ENCODE measurements at regions of chr9 and their contacts with region 1.

Region 1: GRCh38 chr9:127519301-127520166 is 68.2 kb downstream of the LRSAM1 start:
- DNase-seq: peak; percentile 91
- H3K4me3 ChIP-seq: no peak overlapping the region
- H3K27ac ChIP-seq: peak overlapping the region; percentile 96
- H3K27me3 ChIP-seq: no peaks in the 10 kb centered on the region
- CTCF ChIP-seq: no peak

Region 2: GRCh38 chr9:127187231-127187956 is 332.1 kb before region 1 on chr9:
- CTCF ChIA-PET with region 1: no interaction called
- POLR2A ChIA-PET with region 1: no interaction called
- DNase-seq: peak; percentile 97
- H3K4me3 ChIP-seq: no peak overlapping the region
- H3K27ac ChIP-seq: peak overlapping the region; percentile 99
- H3K27me3 ChIP-seq: no peaks in the 10 kb centered on the region
- CTCF ChIP-seq: no peak

Region 3: GRCh38 chr9:127561619-127562500 is 42.3 kb after region 1 on chr9:
- CTCF ChIA-PET with region 1: interaction called, 4 read pairs
- POLR2A ChIA-PET with region 1: interaction called, 12 read pairs
- DNase-seq: peak; percentile 95
- H3K4me3 ChIP-seq: peak overlapping the region; percentile 40
- H3K27ac ChIP-seq: peak overlapping the region; percentile 95
- H3K27me3 ChIP-seq: no peaks in the 10 kb centered on the region
- CTCF ChIP-seq: no peak

Region 4: GRCh38 chr9:127578955-127579853 is 59.7 kb after region 1 on chr9:
- CTCF ChIA-PET with region 1: no interaction called
- POLR2A ChIA-PET with region 1: interaction called, 12 read pairs
- DNase-seq: peak; percentile 89
- H3K4me3 ChIP-seq: peak overlapping the region; percentile 60
- H3K27ac ChIP-seq: peak overlapping the region; percentile 98
- H3K27me3 ChIP-seq: no peaks in the 10 kb centered on the region
- CTCF ChIP-seq: peak; percentile 37

Measured in AG04450 (cell line).